ENCODE measurements at regions of chr7 and their contacts with region 1.

Region 1: GRCh38 chr7:35624299-35625186 is 70.4 kb downstream of the HERPUD2 start:
- DNase-seq: peak in 4 of 5 donors; percentile 36 to 40 (median 38)
- H3K4me3 ChIP-seq: no peak overlapping the region
- H3K4me3 Mint-ChIP-seq: peak overlapping the region in 1 of 8 donors; percentile 63
- H3K27ac ChIP-seq: no peak overlapping the region
- H3K27ac Mint-ChIP-seq: peak overlapping the region in 1 of 7 donors; percentile 17
- H3K4me1 ChIP-seq: peaks cover 4% of the 10 kb centered on the region
- H3K4me1 Mint-ChIP-seq: peaks cover 4 to 6% (median 5%) of the 10 kb centered on the region in 4 donors
- H3K27me3 ChIP-seq: no peaks in the 10 kb centered on the region
- H3K27me3 Mint-ChIP-seq: no peaks in the 10 kb centered on the region

Region 2: DNA sequence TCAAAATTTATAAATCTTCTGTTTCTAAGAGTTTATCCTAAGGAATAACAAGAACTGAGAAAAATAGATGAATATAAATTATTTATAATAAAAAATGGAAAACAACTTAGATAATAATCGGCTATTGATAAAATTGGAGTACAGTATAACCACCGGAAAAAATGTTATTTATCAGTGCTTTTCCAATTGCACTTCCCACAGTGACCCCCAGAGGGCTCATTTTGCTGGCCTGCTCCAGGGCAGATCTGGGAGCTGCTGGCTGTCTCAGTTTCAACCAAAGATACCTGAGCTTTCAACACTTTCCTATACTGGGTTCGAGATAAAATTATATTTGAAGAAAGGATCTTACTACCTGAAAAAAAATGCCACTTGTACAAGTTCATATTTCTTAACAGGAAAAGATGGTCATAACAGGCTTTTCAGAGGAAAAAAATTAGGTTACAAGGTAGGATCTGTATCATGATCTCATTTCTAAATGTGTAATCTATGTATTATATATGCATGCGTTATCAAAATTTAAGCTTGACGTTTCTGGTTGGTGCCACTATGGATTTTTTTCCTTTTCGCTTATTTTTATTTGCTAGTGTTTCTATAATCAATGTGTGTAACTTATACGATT is 800.8 kb before region 1 on chr7:
- CTCF ChIA-PET with region 1: no interaction called
- POLR2A ChIA-PET with region 1: no interaction called
- intact Hi-C with region 1: loop called (anchors 5 kb)
- DNase-seq: peak; percentile 22 to 55 (median 36)
- H3K4me3 ChIP-seq: no peak overlapping the region
- H3K4me3 Mint-ChIP-seq: no peak overlapping the region
- H3K27ac ChIP-seq: no peak overlapping the region
- H3K27ac Mint-ChIP-seq: no peak overlapping the region
- H3K4me1 ChIP-seq: no peaks in the 10 kb centered on the region
- H3K4me1 Mint-ChIP-seq: no peaks in the 10 kb centered on the region
- H3K27me3 ChIP-seq: no peaks in the 10 kb centered on the region
- H3K27me3 Mint-ChIP-seq: no peaks in the 10 kb centered on the region

Region 3: DNA sequence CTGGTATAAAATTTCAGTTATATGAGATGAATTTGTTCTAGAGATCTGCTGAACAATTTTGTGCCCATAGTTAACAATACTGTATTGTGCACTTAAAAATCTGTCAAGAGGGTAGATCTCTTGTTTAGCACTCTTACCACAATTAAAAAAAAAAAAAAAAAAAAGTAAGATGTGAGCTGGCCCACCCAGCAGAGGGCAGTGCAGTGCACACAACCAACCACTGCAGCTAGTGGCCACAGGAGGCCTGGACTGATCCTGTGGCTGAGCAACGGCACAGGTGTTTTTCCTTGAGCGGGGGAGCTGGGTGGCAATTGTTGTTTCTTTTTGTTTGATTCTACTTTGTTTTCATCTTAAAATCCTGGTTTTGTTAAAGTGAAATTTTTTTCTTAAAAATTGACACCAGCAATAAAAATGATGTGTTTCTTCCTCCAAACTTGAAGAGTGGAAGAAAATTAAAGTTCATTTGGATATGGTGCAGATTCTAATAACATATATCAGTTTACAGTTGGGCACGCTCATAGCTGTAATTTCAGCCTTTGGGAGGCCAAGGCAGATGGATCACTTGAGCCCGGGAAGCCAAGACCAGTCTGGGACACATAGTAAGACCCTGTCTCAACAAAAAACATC is 199.6 kb before region 1 on chr7:
- CTCF ChIA-PET with region 1: interaction called, 17 read pairs
- POLR2A ChIA-PET with region 1: no interaction called
- intact Hi-C with region 1: loop called (anchors 1 kb)
- DNase-seq: peak; percentile 45 to 54 (median 51)
- H3K4me3 ChIP-seq: no peak overlapping the region
- H3K4me3 Mint-ChIP-seq: no peak overlapping the region
- H3K27ac ChIP-seq: no peak overlapping the region
- H3K27ac Mint-ChIP-seq: peak overlapping the region in 1 of 7 donors; percentile 3
- H3K4me1 ChIP-seq: no peaks in the 10 kb centered on the region
- H3K4me1 Mint-ChIP-seq: peaks cover 0 to 3% (median 3%) of the 10 kb centered on the region in 4 donors
- H3K27me3 ChIP-seq: no peaks in the 10 kb centered on the region
- H3K27me3 Mint-ChIP-seq: peaks cover 13 to 15% of the 10 kb centered on the region in 2 donors

Region 4: GRCh38 chr7:35508623-35509400 is 115.7 kb before region 1 on chr7:
- CTCF ChIA-PET with region 1: no interaction called
- POLR2A ChIA-PET with region 1: no interaction called
- intact Hi-C with region 1: no loop called
- DNase-seq: no peak
- H3K4me3 ChIP-seq: no peak overlapping the region
- H3K4me3 Mint-ChIP-seq: no peak overlapping the region
- H3K27ac ChIP-seq: no peak overlapping the region
- H3K27ac Mint-ChIP-seq: no peak overlapping the region
- H3K4me1 ChIP-seq: no peaks in the 10 kb centered on the region
- H3K4me1 Mint-ChIP-seq: no peaks in the 10 kb centered on the region
- H3K27me3 ChIP-seq: no peaks in the 10 kb centered on the region
- H3K27me3 Mint-ChIP-seq: peaks cover 0 to 13% of the 10 kb centered on the region in 2 donors

Region 5: GRCh38 chr7:35596061-35596460 is 28.5 kb before region 1 on chr7:
- CTCF ChIA-PET with region 1: interaction called, 13 read pairs
- POLR2A ChIA-PET with region 1: no interaction called
- intact Hi-C with region 1: no loop called
- DNase-seq: no peak
- H3K4me3 ChIP-seq: no peak overlapping the region
- H3K4me3 Mint-ChIP-seq: no peak overlapping the region
- H3K27ac ChIP-seq: no peak overlapping the region
- H3K27ac Mint-ChIP-seq: no peak overlapping the region
- H3K4me1 ChIP-seq: no peaks in the 10 kb centered on the region
- H3K4me1 Mint-ChIP-seq: no peaks in the 10 kb centered on the region
- H3K27me3 ChIP-seq: no peaks in the 10 kb centered on the region
- H3K27me3 Mint-ChIP-seq: no peaks in the 10 kb centered on the region

Region 6: DNA sequence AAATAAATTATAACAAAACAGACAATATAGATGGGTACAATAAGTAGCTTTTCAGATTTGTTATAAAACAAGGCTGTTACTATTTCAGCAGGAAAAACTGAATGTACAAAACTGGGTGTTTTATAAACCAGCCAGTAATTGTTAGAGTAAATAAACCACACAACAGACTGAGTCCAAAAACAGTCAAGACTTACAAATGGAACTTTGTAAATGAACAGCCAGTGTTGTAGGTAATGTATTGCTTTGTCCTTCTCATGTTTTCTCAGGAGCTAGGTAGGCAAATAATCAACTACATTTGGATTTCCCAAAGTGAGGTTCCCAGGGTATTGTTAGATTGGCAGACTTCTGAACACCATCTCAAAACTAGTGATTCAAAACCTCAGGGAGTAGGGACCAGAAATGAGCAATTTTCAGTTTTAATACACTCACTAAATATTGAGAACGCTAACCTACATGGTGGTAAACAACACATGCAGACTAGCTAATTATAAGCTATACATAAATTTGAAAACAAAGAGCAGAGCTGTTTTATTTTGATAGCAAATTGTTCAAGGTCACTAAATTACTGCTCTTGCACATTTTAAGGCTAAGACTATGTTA is 34.2 kb after region 1 on chr7:
- CTCF ChIA-PET with region 1: interaction called, 10 read pairs
- POLR2A ChIA-PET with region 1: no interaction called
- intact Hi-C with region 1: no loop called
- DNase-seq: no peak
- H3K4me3 ChIP-seq: no peak overlapping the region
- H3K4me3 Mint-ChIP-seq: no peak overlapping the region
- H3K27ac ChIP-seq: no peak overlapping the region
- H3K27ac Mint-ChIP-seq: peak overlapping the region in 3 of 7 donors; percentile 3 to 65 (median 59)
- H3K4me1 ChIP-seq: peaks cover 33% of the 10 kb centered on the region
- H3K4me1 Mint-ChIP-seq: peaks cover 36 to 79% (median 57%) of the 10 kb centered on the region in 4 donors
- H3K27me3 ChIP-seq: no peaks in the 10 kb centered on the region
- H3K27me3 Mint-ChIP-seq: no peaks in the 10 kb centered on the region

Region 7: DNA sequence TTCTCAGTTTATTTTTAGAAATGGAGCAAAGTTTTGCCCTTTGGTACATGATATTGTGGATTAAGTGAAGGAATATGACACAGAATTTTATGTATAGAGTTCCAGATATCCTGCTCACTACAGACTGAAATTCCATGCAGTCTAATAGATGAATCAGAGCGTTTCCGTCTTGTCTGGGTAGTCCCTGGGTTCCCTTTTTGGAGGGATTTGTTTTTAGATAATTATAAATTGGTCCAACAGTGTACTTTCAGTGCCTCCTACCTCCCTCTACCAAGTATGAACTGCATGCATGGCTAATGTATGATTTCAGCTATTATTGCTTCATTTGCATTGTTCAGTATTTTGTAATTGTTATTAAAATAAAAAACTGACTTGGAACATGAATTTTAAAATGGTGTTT is 250.7 kb after region 1 on chr7:
- CTCF ChIA-PET with region 1: no interaction called
- POLR2A ChIA-PET with region 1: no interaction called
- intact Hi-C with region 1: no loop called
- DNase-seq: no peak
- H3K4me3 ChIP-seq: no peak overlapping the region
- H3K4me3 Mint-ChIP-seq: no peak overlapping the region
- H3K27ac ChIP-seq: no peak overlapping the region
- H3K27ac Mint-ChIP-seq: peak overlapping the region in 1 of 7 donors; percentile 22
- H3K4me1 ChIP-seq: peaks cover 9% of the 10 kb centered on the region
- H3K4me1 Mint-ChIP-seq: peaks cover 10 to 19% (median 17%) of the 10 kb centered on the region in 4 donors
- H3K27me3 ChIP-seq: no peaks in the 10 kb centered on the region
- H3K27me3 Mint-ChIP-seq: no peaks in the 10 kb centered on the region